Ovary (tissue), 10 donors: ENCODE measurements at regions of chr19 and their contacts with region 1.

Region 1: DNA sequence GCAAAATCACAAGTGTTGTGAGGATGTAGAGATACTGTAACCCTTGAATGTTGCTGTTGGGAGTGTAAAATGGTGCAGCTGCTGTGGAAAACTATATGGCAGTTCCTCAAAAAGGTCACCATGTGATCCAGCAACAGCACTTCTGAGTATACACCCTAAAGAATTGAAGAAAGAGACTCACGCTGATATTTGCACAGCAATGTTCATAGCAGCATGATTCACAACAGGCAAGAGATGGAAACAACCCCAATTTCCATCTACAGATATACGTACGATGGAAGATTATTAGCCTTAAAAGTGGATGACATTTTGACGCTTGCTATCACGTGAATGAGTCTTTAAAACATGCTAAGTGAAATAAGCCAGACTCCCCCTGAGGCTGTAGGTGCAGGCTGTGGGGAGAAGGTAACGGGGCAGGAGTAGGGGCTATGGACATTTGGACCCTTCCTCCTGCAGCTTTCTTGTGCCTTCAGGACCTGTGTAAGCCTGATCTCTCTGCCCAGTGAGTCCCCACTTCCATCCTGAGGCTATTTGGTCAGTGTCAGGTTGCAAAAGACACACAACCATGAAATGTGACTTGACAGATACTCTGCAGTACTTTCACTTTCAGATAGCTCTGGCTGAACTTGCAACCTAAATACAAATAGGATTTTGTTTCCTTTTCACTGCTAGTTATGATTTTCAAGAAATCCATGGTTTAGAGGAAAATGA is 17.6 kb upstream of the EID2 start:
- DNase-seq: no peak
- H3K4me3 ChIP-seq: no peak overlapping the region
- H3K27ac ChIP-seq: no peak overlapping the region
- H3K4me1 ChIP-seq: no peaks in the 10 kb centered on the region
- H3K27me3 ChIP-seq: no peaks in the 10 kb centered on the region
- CTCF ChIP-seq: no peak
- EP300 ChIP-seq: no peak
- POLR2A ChIP-seq: no peak

Region 2: DNA sequence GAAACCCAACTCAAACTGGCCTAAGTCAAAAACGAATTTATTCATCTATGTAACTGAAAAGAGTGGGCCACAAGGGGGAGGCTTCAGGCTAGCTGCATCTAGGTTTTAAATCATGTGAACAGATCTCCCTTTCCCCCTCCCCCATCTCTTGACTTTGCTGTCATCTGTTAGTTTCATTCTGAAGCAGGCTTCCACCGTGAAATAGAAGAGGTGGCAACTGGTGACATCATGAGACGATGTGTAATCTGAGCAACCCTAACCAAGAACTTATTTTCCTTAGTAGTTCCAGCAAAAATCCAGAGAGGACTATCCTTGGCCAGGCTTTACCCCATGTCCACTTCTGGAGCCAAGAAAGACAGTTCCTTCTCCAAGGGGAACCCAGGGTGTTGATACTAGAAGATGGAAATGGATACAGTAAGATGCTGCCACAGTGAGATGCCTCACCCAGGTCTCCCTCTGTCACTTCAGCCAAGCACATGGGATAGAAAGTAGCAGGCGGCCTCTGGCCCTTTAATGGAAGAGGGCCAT is 206.0 kb before region 1 on chr19:
- intact Hi-C with region 1: no loop called
- DNase-seq: no peak
- H3K4me3 ChIP-seq: no peak overlapping the region
- H3K27ac ChIP-seq: no peak overlapping the region
- H3K4me1 ChIP-seq: peaks cover 2% of the 10 kb centered on the region
- H3K27me3 ChIP-seq: no peaks in the 10 kb centered on the region
- CTCF ChIP-seq: no peak
- EP300 ChIP-seq: no peak
- POLR2A ChIP-seq: no peak

Region 3: DNA sequence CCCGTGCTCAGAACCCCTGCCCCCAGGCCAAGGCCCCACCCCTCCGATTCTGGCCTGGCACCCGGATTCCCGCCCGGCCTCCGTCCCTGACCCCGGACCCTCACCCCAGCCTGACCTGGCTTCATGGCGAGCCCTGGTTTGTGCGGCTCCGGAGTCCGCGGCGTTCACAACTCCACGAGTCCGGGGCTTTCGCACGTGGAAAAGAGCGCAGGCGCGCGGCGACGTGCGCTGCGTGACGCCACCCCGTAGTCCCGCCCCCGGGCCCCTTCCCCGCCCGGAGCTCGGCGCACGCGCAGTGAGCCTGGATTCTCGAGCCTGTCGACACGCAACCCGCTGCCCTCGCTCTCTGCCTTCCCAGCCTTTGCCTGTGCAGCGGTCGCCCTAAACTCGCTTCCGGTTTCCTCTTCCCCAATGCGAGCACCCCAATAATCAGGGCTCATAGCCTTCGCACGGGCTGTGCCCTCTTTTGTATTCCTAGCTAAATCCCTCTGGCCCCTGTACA is 288.6 kb after region 1 on chr19 and contains the start of gene FBL:
- intact Hi-C with region 1: loop called in 2 of 4 experiments (anchors 10 kb)
- DNase-seq: peak; percentile 95 to 99 (median 98)
- H3K4me3 ChIP-seq: peak within 1 kb of the TSS; percentile 87
- H3K27ac ChIP-seq: peak within 1 kb of the TSS; percentile 67 to 81
- H3K4me1 ChIP-seq: peaks cover 5% of the 10 kb centered on the region
- H3K27me3 ChIP-seq: no peaks in the 10 kb centered on the region
- CTCF ChIP-seq: no peak
- EP300 ChIP-seq: no peak
- POLR2A ChIP-seq: peak; percentile 73
- total RNA-seq, gene FBL: 218 to 494 (median 369) TPM